ENCODE measurements at regions of chr7 and their contacts with region 1.

Region 1: DNA sequence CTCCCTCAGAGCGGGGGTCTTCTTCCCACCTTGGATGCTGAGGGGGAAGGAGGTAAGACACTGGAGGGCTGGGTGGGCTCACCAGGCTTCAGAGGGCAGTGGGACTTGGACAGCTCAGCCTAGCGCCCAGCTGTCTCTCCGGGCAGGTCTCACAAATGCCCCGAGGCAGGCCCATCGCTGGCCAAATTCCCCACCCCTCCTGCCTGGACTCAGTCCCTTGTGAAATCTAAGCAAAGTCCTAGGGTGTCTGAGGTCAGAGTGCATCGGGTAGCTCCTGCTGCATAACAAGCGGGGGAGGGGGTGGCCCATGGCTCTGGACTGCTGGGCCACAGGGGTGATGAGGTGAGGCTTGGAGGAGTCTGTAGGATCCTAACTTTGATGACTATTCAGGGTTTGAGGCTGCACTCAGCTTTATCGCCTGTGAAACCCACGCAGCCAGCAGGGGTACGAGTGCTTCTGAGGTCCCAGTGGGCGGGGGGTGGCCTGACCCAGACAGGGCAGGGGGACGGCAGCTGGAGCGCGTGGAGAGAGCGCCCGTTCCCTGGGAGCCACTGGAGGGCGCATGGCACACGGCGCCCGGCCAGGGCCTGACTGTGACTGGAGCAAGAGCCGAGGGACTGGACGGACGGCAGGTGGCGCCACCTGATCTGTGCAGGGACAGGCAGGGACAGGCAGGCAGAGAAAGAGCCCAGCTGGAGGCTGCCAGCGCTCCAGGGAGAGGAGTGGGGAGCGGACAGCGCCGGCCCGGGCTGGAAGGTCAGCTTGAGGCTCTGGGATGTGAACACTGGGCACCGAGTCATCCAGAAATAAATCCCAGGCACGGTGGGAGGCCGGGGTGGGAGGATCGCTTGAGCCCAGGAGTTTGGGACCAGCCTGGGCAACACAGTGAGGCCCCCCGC is 10.0 kb downstream of the CYP2W1 start:
- DNase-seq: peak; percentile 70
- H3K4me3 ChIP-seq: no peak overlapping the region
- CTCF ChIP-seq: peak; percentile 100

Region 2: GRCh38 chr7:1004018-1004852 is 11.3 kb after region 1 on chr7:
- CTCF ChIA-PET with region 1: interaction called, 34 read pairs
- POLR2A ChIA-PET with region 1: no interaction called
- DNase-seq: no peak
- H3K4me3 ChIP-seq: no peak overlapping the region
- CTCF ChIP-seq: no peak

Region 3: DNA sequence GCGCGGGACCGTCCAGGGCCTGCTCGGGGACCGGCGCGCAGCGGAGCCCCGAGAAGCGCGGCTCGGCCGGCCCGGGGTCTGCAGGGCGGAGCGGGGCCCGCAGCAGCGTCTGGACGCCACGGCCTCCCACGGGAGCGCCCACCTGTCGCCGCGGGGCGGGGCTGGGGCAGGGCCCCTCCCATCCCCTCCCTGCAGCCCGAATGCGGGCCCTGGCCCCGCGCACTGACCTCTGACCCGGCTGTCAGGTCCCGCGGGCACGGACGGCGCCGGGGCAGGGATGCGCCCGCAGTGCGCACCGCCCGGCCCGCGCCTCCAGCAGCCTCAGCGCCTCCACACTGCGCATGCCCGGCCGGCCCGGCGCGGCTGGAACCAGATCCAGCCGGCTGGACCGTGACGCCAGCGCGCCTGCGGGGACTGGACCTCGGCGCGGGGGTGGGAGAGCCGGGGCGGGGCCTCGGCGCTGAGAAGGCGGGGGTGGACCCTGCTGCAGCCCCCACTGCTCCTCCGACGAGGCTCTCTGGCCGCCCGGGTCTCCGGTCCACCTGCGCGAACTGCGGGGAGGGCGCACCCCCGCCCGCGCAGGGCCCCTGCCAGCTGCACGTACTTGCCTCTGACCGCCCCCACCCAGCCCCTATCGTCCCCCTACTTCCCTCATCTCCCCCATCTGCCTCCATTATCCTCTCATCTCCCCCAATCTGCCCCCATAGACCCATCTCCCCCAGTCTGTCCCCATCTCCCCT is 35.2 kb after region 1 on chr7:
- CTCF ChIA-PET with region 1: interaction called, 29 read pairs
- POLR2A ChIA-PET with region 1: no interaction called
- DNase-seq: no peak
- H3K4me3 ChIP-seq: peak overlapping the region; percentile 67
- CTCF ChIP-seq: no peak

Region 4: DNA sequence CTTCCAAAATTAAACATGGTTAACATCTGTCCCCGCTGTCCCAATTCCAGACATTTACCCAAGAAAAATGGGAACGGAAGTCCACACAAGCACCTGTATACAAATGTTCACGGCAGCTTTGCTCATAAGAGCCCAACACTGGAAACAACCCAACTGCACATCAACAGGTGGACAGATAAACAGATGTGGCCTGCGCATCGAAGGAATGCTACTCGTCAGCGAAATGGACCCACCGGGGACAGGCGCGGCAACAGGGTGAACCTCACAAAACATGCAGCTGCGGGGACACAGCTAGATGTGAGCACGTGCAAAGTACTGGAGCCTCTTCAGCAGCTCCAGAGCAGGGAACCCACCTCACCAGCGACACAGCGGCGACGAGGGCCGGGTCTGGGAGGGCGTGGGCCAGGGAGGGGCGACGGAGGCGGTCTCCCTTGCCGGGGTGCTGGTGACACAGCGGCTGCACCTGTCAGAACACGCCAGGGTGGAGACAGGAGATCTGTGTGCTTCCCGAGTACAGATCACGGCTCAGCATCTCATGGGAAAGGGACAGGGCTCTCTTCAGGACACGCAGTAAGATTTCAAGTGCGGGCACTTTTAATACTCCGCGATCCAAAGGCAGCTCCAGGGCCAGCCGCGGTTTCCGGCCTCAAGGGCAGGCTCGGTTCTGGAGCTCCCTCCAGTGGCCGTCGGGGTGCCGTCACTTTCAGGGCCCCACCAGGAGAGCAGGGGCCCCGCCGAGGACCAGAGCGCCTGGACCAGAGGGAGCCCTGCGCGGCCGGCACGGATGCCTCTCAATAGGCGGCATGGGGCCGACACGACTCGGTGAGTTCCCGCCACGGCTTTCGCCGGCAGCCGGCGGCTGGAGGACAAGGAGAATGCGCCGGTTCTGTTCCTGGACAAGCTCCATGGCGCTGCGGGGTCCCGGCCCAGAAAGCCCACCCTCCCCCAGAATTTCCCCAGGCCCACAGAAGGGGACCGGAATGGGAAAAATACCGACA is 72.6 kb after region 1 on chr7:
- CTCF ChIA-PET with region 1: interaction called, 558 read pairs
- POLR2A ChIA-PET with region 1: interaction called, 6 read pairs
- DNase-seq: no peak
- H3K4me3 ChIP-seq: no peak overlapping the region; the same call in 1 of the 2 replicates
- CTCF ChIP-seq: peak; percentile 90

Region 5: GRCh38 chr7:1103009-1103788 is 110.2 kb after region 1 on chr7:
- CTCF ChIA-PET with region 1: interaction called, 21 read pairs
- POLR2A ChIA-PET with region 1: no interaction called
- DNase-seq: no peak
- H3K4me3 ChIP-seq: no peak overlapping the region
- CTCF ChIP-seq: no peak

Region 6: DNA sequence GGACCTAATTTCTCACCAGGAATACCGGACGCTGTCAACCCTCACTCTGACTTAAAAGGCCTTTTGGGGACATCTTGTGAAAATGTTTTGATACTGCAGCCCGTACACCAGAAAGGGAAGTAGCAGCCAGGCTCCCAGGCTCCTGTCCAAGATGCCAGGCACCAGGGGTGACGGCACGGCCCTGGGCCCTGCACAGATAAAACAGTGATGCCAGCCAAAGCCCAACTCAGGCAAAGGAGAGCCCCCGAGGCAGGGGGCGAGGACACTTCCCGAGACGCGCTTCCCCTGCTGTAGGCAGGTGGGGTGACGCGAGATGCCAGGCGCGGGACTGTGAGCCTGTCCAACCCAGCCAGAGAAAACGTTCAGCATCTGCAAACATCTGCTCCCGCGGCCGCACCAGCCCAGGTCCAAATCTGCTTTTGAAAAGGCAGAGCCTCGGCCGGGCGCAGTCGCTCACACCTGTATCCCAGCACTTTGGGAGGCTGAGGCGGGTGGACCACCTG is 151.4 kb after region 1 on chr7:
- CTCF ChIA-PET with region 1: interaction called, 23 read pairs
- POLR2A ChIA-PET with region 1: no interaction called
- DNase-seq: no peak
- H3K4me3 ChIP-seq: no peak overlapping the region
- CTCF ChIP-seq: no peak

Region 7: DNA sequence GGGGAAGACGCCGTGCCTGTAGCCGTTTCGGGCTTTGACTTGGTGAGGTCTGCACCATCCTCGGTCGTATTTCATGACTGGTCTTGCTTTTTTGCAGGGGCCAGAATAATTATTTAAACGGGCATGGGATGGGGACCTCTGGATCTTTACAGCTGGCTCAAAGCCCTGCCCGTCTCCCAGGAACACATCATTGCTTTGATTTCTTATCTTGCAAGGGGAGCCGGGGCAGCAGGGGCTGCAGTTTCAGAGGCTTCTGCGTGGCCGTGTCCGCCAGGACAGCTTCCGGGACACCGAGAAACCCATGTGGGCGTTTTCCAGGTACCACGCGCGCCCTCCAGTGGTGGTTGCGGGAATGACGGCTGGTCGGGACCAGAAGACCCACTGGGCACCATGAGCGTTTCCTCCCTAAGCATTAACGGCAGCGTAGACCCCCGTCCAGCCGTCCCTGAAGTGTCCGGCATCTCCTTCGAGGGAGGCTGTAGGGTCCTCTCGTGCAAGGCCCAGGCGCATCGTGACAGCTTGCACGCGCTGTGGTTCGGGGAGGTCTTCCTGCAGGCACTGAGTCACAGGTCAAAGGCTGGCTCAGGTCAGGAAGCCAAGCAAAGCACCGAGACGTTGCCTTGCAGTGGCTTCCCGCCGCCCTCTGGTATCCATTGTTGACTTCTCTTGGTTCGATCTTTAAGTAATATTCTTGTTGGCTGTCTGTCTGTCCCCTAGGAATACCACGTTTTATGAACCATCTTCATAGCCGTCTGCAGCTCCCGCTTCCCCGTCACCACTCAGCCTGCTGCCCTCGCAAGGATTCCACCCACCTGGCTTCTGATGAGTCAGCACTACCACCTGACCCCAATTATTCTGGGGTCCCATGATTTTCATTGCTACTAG is 183.3 kb after region 1 on chr7:
- CTCF ChIA-PET with region 1: interaction called, 90 read pairs
- POLR2A ChIA-PET with region 1: no interaction called
- DNase-seq: no peak
- H3K4me3 ChIP-seq: peak overlapping the region; percentile 25; the same call in 1 of the 2 replicates
- CTCF ChIP-seq: peak; percentile 96

Region 8: GRCh38 chr7:1275451-1276381 is 282.8 kb after region 1 on chr7:
- CTCF ChIA-PET with region 1: no interaction called
- POLR2A ChIA-PET with region 1: no interaction called
- DNase-seq: no peak
- H3K4me3 ChIP-seq: no peak overlapping the region
- CTCF ChIP-seq: no peak

Measured in AG04449 (cell line).